Right ventricle myocardium inferior (tissue), 1 donor: ENCODE measurements at regions of chr2 and their contacts with region 1.

Region 1: DNA sequence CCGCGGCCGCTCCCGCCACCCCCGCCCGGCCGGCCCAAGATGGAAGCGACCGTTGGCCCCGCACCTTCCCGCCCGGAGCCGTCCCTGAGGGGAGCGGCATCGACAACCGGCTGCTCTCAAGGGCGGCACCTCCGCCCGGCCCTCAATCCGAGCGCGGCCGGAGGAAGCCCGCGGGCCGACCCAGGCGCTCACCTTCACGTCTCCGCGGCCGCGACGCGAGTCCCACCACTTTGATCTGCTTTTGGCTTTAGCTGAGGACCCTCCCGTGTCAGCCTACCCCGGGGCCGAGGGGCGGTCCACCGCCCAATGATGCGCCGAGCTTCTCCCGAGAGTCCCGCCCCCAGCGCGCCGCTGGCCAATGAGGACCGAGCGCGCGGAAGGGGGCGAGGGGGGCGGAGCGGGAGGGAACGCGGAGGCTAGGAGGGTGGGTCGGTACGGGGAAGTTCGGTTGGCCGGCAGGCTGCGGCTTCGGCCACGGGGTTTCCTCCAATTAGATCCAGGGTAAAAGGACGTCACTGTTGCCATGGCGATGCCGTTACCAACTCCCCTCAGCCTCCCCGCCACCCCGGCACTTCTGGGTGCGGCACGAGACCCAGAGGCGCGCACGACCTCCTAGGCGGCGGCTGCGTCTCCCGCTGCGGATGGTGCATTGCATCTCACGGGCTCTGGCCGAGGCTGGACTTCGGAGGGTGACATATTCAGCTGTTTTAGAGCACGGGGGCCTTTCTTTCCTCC is at the start of gene YWHAQ:
- DNase-seq: peak; percentile 99
- ATAC-seq: peak; percentile 98
- total RNA-seq, gene YWHAQ: 116 TPM

Region 2: GRCh38 chr2:9474361-9474967 is 156.5 kb before region 1 on chr2 and contains the start of gene IAH1:
- intact Hi-C with region 1: loop called (anchors 2 kb)
- DNase-seq: peak; percentile 90
- ATAC-seq: peak; percentile 91
- total RNA-seq, gene IAH1: 85.9 TPM

Region 3: GRCh38 chr2:9555297-9556141 is 75.4 kb before region 1 on chr2 and contains the start of gene ADAM17:
- intact Hi-C with region 1: loop called (anchors 2 kb)
- DNase-seq: peak; percentile 100
- ATAC-seq: peak; percentile 98
- total RNA-seq, gene ADAM17: 13.5 TPM

Region 4: DNA sequence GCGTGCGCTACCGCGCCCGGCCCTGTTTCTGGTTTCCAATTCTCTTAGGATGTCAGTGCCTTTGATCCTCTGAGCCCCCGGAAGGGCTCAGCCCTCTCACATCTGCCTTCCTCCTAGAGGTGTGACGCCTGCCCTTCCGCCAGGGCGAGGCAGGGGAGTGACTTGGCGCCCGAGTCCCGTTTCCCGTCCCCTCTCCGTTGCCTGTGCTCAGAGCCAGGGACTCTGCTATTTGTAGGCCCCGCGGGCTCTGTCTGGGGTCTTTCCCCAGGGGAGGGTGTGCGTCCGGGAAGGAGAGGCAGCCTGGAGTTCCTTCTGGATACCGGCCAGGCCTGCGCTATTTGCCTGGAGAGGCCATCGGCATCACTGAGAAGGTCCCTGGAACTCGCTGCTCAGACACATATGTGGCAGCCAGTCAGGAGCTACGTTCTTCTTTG is 108.6 kb after region 1 on chr2:
- intact Hi-C with region 1: loop called (anchors 2 kb)
- DNase-seq: peak; percentile 88
- ATAC-seq: peak; percentile 86

Region 5: GRCh38 chr2:9763356-9764152 is 132.6 kb after region 1 on chr2:
- intact Hi-C with region 1: loop called (anchors 5 kb)
- DNase-seq: no peak
- ATAC-seq: peak; percentile 32